Gastrocnemius medialis (tissue), 4 donors: ENCODE measurements at regions of chr7 and their contacts with region 1.

Region 1: DNA sequence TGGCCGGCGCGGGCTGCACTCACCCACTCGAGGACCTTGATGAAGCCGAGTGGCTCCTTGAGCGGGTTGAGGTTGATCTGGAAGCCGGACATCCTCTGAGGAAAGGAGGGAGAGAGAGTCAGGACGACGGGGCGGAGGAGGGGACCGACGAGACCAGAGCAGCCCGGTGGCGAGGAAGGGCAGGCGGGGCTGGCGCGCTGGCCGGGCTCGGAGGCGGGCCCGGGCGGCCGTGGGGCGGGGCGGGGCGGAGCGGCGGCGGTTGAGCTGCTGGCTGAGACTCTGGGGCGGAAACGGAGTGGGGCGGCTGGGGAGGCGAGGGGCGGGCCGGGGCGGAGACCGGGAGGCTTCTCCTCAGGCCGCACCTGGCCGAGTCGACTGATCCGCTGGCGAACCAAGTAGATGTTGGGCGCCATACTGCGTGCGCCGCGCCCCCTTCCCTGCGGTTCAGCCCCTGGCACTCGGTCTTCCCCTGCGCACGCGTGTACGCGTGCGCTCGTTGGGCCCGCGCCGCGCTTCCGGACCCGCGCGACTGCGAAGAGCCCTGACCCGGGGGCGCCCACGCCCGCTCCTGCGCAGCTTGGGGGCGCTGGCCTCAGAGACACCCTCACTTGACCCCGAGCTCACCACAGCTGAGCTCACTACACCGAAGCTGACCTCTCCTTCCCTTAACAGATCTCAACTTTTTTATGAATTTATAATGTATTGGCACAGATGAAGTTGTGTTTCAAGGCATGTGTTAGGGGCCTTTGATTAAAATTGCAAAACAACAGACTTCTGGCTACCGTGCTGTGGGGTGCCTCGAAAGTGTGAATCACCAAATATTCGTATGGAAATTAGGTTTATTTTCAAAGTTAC is at the start of gene SYPL1:
- DNase-seq: peak; percentile 90 to 92
- ATAC-seq: peak; percentile 77 to 80
- H3K4me3 ChIP-seq: peak within 1 kb of the TSS; percentile 71 to 82 (median 72)
- H3K27ac ChIP-seq: peak within 1 kb of the TSS; percentile 94 to 99 (median 98)
- H3K4me1 ChIP-seq: peaks cover 53 to 58% of the 10 kb centered on the region in 2 donors
- H3K27me3 ChIP-seq: no peaks in the 10 kb centered on the region
- CTCF ChIP-seq: peak in 1 of 5 experiments; percentile 31
- POLR2A ChIP-seq: peak; percentile 10 to 76
- total RNA-seq, gene SYPL1: 81.5 to 90.9 (median 83.2) TPM

Region 2: DNA sequence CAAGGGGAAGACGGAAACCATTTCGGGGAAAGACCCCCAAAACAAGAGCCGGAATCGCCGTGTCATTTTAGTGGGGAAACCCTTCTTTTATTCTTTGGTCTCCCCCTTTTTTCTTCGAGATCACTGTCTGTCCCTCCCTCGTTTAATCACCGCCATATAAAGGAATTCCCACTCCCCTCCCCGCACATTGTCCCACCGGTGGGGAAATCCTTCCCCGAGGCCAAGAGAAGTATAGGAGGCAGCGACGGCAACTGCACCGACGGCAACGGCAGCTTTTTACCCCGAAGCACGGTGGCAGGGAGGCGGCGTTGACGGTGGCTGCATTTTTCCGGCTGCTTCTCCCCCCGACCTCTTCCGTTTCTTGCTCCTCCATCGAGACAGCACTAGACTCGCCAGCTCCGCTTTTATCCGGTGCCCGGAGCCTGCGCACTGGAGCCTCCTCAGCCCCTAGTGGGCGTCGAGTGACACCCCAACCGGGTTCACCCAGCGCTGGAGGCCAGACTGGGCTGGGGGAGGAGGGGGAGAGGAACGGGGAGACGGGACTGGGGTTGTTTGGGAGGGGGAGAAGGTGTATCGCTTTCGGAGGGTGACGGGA is 1099.0 kb before region 1 on chr7:
- in situ Hi-C with region 1: loop called in 1 of 4 experiments (anchors 25 kb)
- intact Hi-C with region 1: loop called (anchors 5 kb)
- DNase-seq: peak; percentile 96 to 97
- ATAC-seq: peak; percentile 65 to 69
- H3K4me3 ChIP-seq: peak overlapping the region; percentile 81 to 98 (median 92)
- H3K27ac ChIP-seq: peak overlapping the region in 1 of 4 donors; percentile 100
- H3K4me1 ChIP-seq: peaks cover 51 to 52% of the 10 kb centered on the region in 2 donors
- H3K27me3 ChIP-seq: no peaks in the 10 kb centered on the region
- CTCF ChIP-seq: peak; percentile 45 to 78 (median 65)
- POLR2A ChIP-seq: peak; percentile 95 to 97

Region 3: GRCh38 chr7:106064771-106065585 is 47.4 kb before region 1 on chr7:
- in situ Hi-C with region 1: no loop called
- intact Hi-C with region 1: loop called (anchors 1 kb)
- DNase-seq: peak; percentile 94 to 95
- ATAC-seq: peak; percentile 94 to 96
- H3K4me3 ChIP-seq: peak overlapping the region; percentile 35 to 55 (median 48)
- H3K27ac ChIP-seq: peak overlapping the region; percentile 81 to 92 (median 86)
- H3K4me1 ChIP-seq: peaks cover 22 to 35% of the 10 kb centered on the region in 2 donors
- H3K27me3 ChIP-seq: no peaks in the 10 kb centered on the region
- CTCF ChIP-seq: peak in 1 of 5 experiments; percentile 20
- POLR2A ChIP-seq: no peak

Region 4: DNA sequence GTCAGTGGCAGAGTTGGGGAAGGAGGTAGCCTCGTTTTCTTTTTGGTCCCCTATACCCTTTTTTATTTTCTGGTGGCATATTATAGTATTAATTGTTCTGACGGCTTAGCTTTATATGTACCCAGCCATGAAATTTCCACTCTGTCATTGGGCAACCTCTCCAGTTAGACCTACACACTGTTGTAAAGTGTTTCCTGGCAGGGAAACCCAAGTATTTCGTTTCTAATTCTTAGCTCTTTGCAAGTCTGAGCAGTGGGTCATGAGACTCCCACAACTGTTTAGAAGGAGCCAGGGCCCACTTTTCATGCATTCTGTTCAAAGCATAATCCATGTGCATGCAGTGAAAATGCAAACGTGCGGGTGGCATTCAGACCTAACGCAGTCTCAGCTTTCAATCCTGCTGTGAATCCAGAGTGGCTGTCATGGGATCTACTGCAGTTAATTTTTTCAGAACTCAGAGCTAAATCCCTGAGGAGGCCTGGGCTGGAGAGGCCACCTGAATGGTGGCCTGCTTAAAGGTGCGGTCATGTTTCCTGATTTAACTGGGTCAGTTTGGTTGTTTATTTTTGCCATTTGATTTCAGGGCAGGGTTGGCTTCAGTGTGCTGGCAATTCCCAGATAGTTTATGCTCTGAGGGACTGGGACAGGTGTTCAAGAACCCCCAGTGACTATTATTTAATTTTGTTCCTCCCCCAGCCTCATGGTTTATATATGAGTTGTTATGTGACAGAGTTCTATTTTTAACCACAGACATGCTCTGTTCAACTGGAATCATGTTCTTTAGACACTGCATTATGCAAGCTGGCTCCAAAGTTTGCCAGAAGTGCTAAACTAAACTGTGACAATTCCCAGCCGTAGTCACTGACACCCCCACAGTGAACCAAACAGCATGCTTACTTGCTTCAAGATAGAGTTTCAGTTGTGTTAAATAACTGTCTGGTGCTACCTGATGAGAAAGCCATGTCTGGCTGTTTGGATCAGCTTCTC is 27.2 kb after region 1 on chr7:
- in situ Hi-C with region 1: no loop called
- intact Hi-C with region 1: loop called (anchors 1 kb)
- DNase-seq: peak; percentile 84 to 88
- ATAC-seq: peak; percentile 91 to 93
- H3K4me3 ChIP-seq: peak overlapping the region; percentile 7 to 26 (median 10)
- H3K27ac ChIP-seq: peak overlapping the region; percentile 91 to 98 (median 93)
- H3K4me1 ChIP-seq: peaks cover 32 to 38% of the 10 kb centered on the region in 2 donors
- H3K27me3 ChIP-seq: no peaks in the 10 kb centered on the region
- CTCF ChIP-seq: peak in 1 of 5 experiments; percentile 9
- POLR2A ChIP-seq: peak in 1 of 2 donors; percentile 64

Region 5: GRCh38 chr7:106153891-106154449 is 41.6 kb after region 1 on chr7:
- in situ Hi-C with region 1: no loop called
- intact Hi-C with region 1: loop called (anchors 5 kb)
- DNase-seq: peak; percentile 66 to 79
- ATAC-seq: peak; percentile 89 to 98
- H3K4me3 ChIP-seq: peak overlapping the region in 2 of 4 donors; percentile 24 to 26
- H3K27ac ChIP-seq: no peak overlapping the region
- H3K4me1 ChIP-seq: peaks cover 13 to 19% of the 10 kb centered on the region in 2 donors
- H3K27me3 ChIP-seq: no peaks in the 10 kb centered on the region
- CTCF ChIP-seq: peak; percentile 95 to 98 (median 97)
- POLR2A ChIP-seq: no peak

Region 6: GRCh38 chr7:106165337-106165736 is 53.0 kb after region 1 on chr7:
- in situ Hi-C with region 1: no loop called
- intact Hi-C with region 1: no loop called
- DNase-seq: no peak
- ATAC-seq: no peak
- H3K4me3 ChIP-seq: no peak overlapping the region
- H3K27ac ChIP-seq: no peak overlapping the region
- H3K4me1 ChIP-seq: peaks cover 19 to 20% of the 10 kb centered on the region in 2 donors
- H3K27me3 ChIP-seq: no peaks in the 10 kb centered on the region
- CTCF ChIP-seq: no peak
- POLR2A ChIP-seq: no peak